ENCODE measurements at regions of chr5 and their contacts with region 1.

Region 1: DNA sequence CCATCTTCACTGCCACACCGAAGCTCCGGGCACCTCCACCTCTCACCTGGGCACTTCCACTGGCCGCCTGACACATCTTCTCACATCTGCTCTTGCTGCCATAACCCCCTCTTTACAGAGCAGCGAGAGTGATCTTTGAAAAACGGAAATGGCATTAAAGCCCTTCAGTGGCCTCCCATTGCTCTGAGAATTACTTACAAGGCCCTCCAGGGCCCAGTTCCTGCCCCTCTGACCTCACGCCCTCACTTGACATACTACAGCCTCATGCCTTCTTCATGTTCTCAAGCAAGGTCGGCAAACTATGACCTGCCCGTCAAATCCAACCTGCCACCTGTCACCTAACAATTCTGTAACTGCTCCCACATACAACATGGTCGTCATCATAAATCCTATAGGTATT is 187.3 kb downstream of the NR3C1 start:
- DNase-seq: no peak
- ATAC-seq: no peak
- H3K4me3 ChIP-seq: no peak overlapping the region
- H3K4me3 Mint-ChIP-seq: no peak overlapping the region
- H3K27ac ChIP-seq: no peak overlapping the region
- H3K27ac Mint-ChIP-seq: no peak overlapping the region
- H3K4me1 ChIP-seq: peaks cover 9% of the 10 kb centered on the region in 2 donors
- H3K4me1 Mint-ChIP-seq: peaks cover 26% of the 10 kb centered on the region
- H3K27me3 ChIP-seq: no peaks in the 10 kb centered on the region
- H3K27me3 Mint-ChIP-seq: no peaks in the 10 kb centered on the region
- CTCF ChIP-seq: no peak

Region 2: GRCh38 chr5:143592648-143593047 is 376.4 kb after region 1 on chr5:
- CTCF ChIA-PET with region 1: no interaction called
- POLR2A ChIA-PET with region 1: interaction called, 12 read pairs
- intact Hi-C with region 1: no loop called
- DNase-seq: no peak
- ATAC-seq: peak; percentile 62
- H3K4me3 ChIP-seq: no peak overlapping the region
- H3K4me3 Mint-ChIP-seq: no peak overlapping the region
- H3K27ac ChIP-seq: no peak overlapping the region
- H3K27ac Mint-ChIP-seq: no peak overlapping the region
- H3K4me1 ChIP-seq: peaks cover 17 to 19% of the 10 kb centered on the region in 2 donors
- H3K4me1 Mint-ChIP-seq: peaks cover 41% of the 10 kb centered on the region
- H3K27me3 ChIP-seq: no peaks in the 10 kb centered on the region
- H3K27me3 Mint-ChIP-seq: no peaks in the 10 kb centered on the region
- CTCF ChIP-seq: no peak

Measured in B cell (primary cell).